ENCODE measurements at regions of chr1 and their contacts with region 1.

Region 1: DNA sequence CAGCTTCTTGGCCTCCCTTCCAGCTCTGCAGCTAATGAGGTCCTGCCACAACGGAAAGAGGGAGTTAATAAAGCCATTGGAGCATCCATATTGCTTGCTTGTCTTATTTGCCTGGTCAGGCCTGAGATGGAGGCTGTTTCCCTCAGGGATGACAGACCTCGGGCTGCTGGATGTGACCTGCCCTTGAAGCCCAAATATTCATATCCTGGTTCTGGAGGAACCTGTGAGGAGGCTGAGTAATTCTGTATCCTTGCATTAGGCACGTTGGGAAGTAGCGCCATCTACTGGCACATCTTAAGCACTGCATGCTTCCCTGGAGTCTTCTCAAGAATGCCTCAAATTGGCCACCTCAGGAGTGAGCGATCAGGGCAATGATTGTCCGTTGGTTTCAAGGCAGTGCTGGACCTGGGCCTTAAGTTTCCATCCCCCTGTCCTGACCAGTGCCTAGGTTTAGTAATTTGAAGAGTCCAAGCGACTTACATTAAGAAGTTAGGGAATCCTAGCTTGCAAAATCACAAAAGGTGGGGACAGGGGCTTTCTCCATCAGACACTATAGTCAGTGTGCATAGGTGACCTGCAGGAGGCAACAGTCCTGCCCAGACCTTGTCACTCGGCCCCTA is 13.8 kb upstream of the NASP start:
- DNase-seq: peak; percentile 17
- H3K4me3 ChIP-seq: no peak overlapping the region
- CTCF ChIP-seq: peak; percentile 93

Region 2: DNA sequence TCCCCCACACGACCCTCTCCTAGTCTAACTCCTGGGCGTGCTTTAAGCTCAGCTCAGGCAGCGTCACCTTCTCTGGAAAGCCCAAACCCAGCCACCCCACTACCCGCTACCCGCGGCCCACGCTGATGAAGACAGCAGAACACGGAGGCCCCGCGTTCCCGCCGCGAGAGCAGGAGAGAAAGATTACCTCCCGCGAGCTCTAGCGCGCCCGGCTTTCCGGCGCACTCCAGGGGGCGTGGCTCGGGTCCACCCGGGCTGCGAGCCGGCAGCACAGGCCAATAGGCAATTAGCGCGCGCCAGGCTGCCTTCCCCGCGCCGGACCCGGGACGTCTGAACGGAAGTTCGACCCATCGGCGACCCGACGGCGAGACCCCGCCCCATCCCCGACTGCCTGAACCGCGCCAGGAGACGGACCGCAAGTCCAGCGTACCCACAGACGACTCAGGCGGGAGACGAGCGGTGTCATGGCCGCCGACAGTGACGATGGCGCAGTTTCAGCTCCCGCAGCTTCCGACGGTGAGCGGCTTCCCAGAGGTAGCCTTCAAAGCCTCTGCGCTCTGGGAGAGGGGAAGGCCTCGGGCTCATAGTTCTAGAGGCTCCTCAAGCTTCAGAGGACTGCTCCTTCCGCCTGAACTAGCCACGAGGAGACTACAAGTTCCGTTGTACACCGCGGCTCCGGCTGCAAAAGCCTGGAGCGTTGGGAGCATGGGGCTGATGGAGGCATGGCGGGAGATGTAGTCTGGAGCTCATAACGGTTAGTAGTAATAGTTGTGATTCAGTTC is 230.1 kb before region 1 on chr1 and contains the starts of genes MUTYH and TOE1:
- CTCF ChIA-PET with region 1: no interaction called
- POLR2A ChIA-PET with region 1: no interaction called
- DNase-seq: peak; percentile 36
- H3K4me3 ChIP-seq: peak within 1 kb of the TSS; percentile 97
- CTCF ChIP-seq: no peak

Region 3: GRCh38 chr1:45490626-45491486 is 79.2 kb before region 1 on chr1 and contains the start of gene TESK2:
- CTCF ChIA-PET with region 1: interaction called, 32 read pairs
- POLR2A ChIA-PET with region 1: no interaction called
- DNase-seq: peak; percentile 94
- H3K4me3 ChIP-seq: peak within 1 kb of the TSS; percentile 91
- CTCF ChIP-seq: peak; percentile 16

Region 4: DNA sequence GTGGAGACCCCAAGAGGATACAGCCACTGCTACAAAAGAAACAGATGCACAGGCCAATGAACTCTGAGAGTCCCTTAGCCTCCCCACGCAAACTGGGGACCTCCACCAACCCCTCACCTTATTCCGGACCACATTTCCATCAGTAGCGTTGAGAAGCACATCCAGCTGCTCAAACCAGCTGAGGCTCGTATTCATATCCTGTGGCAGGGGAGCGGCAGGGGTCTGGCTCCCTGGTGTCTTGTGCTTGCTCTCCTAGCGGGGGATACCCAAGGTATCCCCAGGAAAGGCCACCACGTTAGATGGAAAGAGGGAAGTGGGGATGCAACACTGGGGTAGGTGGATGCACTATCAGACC is 70.7 kb before region 1 on chr1:
- CTCF ChIA-PET with region 1: interaction called, 32 read pairs
- POLR2A ChIA-PET with region 1: no interaction called
- DNase-seq: no peak
- H3K4me3 ChIP-seq: peak overlapping the region; percentile 93
- CTCF ChIP-seq: no peak

Region 5: DNA sequence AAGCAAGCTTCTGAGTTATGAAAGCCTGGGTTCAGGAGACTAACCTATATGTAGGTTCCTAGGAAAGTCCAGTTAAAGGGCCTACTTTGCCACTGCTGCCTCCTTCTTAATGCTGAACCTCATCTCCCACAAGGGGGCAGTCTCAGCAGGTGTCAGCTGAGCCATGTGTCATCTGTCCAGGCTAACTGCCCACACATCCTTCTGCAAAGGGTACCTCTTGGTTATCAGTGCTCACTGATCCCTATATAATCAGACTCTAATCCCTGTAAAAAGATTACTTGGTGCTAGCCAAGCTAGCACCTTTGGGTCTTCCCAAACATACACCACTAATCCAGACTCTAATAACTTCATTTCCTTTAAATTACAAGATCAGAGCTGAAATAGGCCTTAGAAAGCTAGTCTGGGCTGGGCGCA is 57.4 kb before region 1 on chr1:
- CTCF ChIA-PET with region 1: interaction called, 150 read pairs
- POLR2A ChIA-PET with region 1: no interaction called
- DNase-seq: no peak
- H3K4me3 ChIP-seq: no peak overlapping the region
- CTCF ChIP-seq: peak; percentile 67

Region 6: GRCh38 chr1:45535988-45536766 is 33.9 kb before region 1 on chr1:
- CTCF ChIA-PET with region 1: no interaction called
- POLR2A ChIA-PET with region 1: no interaction called
- DNase-seq: no peak
- H3K4me3 ChIP-seq: no peak overlapping the region
- CTCF ChIP-seq: no peak

Region 7: GRCh38 chr1:45550401-45551351 is 19.4 kb before region 1 on chr1 and contains the start of gene AKR1A1:
- CTCF ChIA-PET with region 1: interaction called, 131 read pairs
- POLR2A ChIA-PET with region 1: interaction called, 8 read pairs
- DNase-seq: peak; percentile 21
- H3K4me3 ChIP-seq: peak within 1 kb of the TSS; percentile 92
- CTCF ChIP-seq: no peak

Region 8: DNA sequence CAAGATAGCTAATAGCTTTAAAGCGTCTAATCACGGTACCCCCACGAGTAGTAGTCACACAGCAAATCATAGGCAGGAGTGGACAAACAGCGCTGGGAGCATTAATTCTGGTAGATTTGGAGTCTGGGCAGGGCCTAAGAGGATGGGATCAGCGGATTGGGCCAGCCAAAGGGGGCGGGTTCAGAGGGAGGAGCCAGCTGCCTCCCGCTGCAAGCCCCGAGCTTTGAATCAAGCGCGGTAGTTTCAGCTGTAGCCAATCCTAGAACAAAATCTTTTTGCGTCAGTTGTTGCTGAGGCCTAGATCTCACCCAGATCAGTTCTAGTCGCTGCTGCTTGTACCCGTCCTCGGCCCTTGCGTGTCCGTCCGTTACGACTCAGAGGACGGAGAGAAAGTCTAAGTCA is 13.2 kb after region 1 on chr1:
- CTCF ChIA-PET with region 1: interaction called, 98 read pairs
- POLR2A ChIA-PET with region 1: interaction called, 5 read pairs
- DNase-seq: peak; percentile 74
- H3K4me3 ChIP-seq: peak overlapping the region; percentile 96
- CTCF ChIP-seq: no peak

Region 9: DNA sequence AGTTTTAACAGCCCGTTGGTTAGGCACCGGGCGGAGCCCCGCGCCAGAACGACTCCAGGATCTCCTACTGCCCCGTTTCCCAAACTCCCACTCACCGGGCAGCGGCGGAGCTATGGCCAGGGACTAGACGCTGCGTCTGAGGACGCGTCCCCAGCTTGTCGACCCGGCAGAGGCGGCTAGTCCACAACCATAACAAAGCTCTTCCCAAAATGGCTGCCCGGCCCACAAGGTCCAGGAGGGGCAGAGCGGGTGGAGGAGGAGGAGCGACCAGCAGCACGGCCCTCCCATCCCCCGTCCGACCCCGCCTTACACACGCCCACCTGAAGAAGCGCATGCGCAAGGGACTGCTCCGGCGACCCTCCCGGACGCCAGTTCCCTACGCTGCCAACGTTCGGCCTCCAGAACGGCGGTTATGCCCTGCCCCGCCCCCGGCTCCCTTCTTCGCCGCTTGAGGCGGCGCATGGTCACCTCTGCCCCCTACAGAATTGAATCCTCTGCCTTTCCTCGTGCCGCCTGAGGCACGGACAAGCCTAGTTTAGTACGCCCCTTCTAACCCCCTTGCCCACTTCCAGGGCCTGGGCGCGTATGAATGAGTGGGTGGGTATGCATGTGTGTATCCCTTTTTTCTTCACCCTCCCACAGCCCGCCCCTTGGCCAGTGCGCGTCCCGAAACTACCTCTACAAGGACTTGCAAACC is 116.4 kb after region 1 on chr1 and contains the start of gene GPBP1L1:
- CTCF ChIA-PET with region 1: no interaction called
- POLR2A ChIA-PET with region 1: no interaction called
- DNase-seq: peak; percentile 80
- H3K4me3 ChIP-seq: peak within 1 kb of the TSS; percentile 99
- CTCF ChIP-seq: no peak

Region 10: DNA sequence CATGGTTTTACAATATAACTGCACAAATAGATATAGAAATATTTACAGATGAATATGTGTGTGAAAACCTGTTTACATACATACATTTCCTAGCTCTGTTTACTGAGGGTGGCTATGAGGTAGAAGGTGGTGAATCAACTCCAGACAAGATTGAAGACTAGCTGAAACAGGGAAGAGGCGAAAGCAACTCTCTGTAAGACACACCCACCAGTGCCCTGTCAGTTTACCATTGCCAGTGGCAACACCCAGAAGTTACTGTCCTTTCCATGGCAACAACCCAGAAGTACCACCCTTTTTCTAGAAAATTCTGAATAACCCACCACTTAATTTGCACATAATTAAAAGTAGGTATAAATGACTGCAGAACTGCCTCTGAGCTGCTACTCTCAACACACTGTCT is 134.6 kb after region 1 on chr1:
- CTCF ChIA-PET with region 1: no interaction called
- POLR2A ChIA-PET with region 1: no interaction called
- DNase-seq: no peak
- H3K4me3 ChIP-seq: no peak overlapping the region
- CTCF ChIP-seq: no peak

Measured in AG04449 (cell line).